T-cell (primary cell): ENCODE measurements at regions of chr3 and their contacts with region 1.

Region 1: GRCh38 chr3:129087138-129087702 is 26.6 kb downstream of the GP9 start:
- DNase-seq: no peak
- ATAC-seq: no peak
- H3K4me3 ChIP-seq: no peak overlapping the region
- H3K4me3 Mint-ChIP-seq: no peak overlapping the region
- H3K27ac ChIP-seq: no peak overlapping the region
- H3K27ac Mint-ChIP-seq: peak overlapping the region; percentile 52 to 77
- H3K4me1 ChIP-seq: peaks cover 0 to 9% of the 10 kb centered on the region in 2 experiments
- H3K4me1 Mint-ChIP-seq: peaks cover 4 to 20% (median 6%) of the 10 kb centered on the region in 3 donors
- H3K27me3 ChIP-seq: no peaks in the 10 kb centered on the region
- H3K27me3 Mint-ChIP-seq: no peaks in the 10 kb centered on the region

Region 2: DNA sequence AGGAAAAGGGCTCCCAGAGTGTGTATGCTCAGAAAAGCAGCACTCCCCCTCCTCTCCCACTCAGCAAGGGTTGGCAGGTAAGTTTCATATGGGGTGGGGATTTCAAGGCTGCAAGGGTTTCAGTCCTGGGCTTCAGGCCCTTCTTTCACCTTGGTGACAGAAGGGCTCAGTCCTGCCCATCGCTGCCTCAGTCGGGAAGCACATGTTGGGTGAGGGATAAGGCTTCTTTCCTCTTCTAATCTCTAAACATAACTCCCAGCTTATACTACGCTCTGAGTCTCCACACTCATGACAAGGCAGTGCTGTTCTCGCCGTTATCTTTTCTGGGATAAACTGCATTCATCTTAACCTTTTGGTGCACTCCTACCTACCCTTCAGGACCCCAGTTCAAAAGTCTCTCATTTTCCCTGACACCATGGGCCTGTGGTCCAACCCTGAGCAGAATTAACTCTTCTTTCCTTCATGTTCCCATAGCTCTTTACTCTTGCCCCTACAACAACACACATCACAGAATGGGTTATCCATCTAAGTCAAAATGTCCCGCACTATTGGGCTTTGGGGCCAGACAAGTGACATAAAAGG is 17.4 kb after region 1 on chr3:
- CTCF ChIA-PET with region 1: interaction called in 1 of 2 experiments, 3 read pairs
- POLR2A ChIA-PET with region 1: interaction called in 1 of 2 experiments, 13 read pairs
- DNase-seq: no peak
- ATAC-seq: no peak
- H3K4me3 ChIP-seq: no peak overlapping the region
- H3K4me3 Mint-ChIP-seq: peak overlapping the region in 1 of 3 donors; percentile 50
- H3K27ac ChIP-seq: no peak overlapping the region
- H3K27ac Mint-ChIP-seq: peak overlapping the region; percentile 4 to 86
- H3K4me1 ChIP-seq: peaks cover 18 to 75% of the 10 kb centered on the region in 2 experiments
- H3K4me1 Mint-ChIP-seq: peaks cover 81 to 91% (median 83%) of the 10 kb centered on the region in 3 donors
- H3K27me3 ChIP-seq: no peaks in the 10 kb centered on the region
- H3K27me3 Mint-ChIP-seq: no peaks in the 10 kb centered on the region